ENCODE measurements at regions of chr17 and their contacts with region 1.

Region 1: DNA sequence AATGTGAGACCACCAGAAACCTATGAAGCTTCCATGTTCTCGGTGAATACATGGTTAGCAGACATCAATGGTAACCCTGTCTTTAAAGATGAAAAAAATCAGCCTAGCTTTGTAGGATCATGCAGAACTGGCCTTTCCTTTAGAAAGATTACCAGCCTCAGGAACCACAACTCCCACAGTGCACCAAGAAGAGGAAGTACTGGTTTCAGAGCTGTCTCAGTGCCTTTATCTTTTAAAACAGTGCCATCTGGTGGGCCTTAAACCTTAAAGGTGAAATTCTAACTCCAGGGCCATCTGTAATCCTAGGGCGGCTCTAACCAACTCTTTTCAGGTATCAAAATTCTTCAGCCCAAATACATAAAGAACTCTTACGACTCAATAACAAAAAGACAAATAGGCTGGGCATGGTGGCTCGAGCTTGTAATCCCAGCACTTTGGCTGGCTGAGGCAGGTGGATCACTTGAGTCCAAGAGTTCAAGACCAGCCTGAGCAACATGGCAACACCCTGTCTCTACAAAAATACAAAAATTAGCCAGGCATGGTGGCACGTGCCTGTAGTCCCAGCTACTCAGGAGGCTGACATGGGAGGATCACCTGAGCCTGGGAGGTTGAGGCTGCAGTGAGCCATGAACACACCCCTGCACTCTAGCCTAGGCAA is 5.4 kb downstream of the ATPAF2 start:
- DNase-seq: peak; percentile 86
- H3K4me3 Mint-ChIP-seq: no peak overlapping the region
- H3K27ac Mint-ChIP-seq: no peak overlapping the region
- H3K4me1 Mint-ChIP-seq: peaks cover 13% of the 10 kb centered on the region
- H3K27me3 Mint-ChIP-seq: no peaks in the 10 kb centered on the region
- CTCF ChIP-seq: peak; percentile 59

Region 2: DNA sequence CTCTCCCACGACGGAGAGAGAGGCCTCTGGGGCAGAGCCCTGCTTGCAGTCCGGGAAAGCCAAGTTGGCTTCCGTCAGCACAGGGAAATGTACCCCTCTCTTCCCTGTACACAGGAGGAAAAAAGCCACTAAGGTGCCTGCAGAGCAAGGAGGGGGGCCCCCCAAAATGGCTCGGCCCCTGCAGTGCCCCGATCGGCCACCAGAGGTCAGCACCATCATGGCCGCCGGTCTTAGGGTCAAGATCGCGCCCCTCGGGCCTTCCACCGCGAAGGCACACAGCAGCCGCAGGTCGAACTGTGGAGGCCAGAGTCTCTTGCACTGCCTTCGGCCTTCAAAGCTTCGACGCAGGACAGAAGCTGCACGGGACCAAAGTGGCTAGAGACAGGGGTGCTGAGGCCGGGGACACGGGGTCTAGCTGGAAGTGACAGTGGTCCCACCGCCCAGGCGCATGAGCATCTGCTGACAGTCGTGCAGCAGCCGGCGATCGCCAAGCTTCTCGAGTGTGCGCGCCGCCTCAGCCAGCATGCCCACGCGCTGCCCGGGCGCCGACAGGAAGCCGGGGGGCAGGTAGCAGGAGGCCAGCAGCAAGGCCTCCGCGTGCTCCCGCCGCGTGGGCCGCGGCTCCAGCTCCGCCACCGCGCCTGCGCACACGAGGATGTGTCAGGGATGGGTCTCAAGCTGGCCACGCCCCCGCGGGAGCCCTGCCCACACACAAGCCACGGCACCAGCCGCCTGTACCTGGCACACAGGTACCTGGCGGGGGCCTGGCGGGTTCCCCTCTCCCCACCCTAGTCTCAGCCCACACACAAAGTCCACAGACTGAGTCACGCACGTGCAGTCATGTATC is 221.1 kb before region 1 on chr17:
- CTCF ChIA-PET with region 1: interaction called, 4 read pairs
- POLR2A ChIA-PET with region 1: no interaction called
- intact Hi-C with region 1: loop called (anchors 1 kb)
- DNase-seq: peak; percentile 62
- H3K4me3 Mint-ChIP-seq: no peak overlapping the region
- H3K27ac Mint-ChIP-seq: no peak overlapping the region
- H3K4me1 Mint-ChIP-seq: peaks cover 5% of the 10 kb centered on the region
- H3K27me3 Mint-ChIP-seq: no peaks in the 10 kb centered on the region
- CTCF ChIP-seq: peak; percentile 98

Region 3: DNA sequence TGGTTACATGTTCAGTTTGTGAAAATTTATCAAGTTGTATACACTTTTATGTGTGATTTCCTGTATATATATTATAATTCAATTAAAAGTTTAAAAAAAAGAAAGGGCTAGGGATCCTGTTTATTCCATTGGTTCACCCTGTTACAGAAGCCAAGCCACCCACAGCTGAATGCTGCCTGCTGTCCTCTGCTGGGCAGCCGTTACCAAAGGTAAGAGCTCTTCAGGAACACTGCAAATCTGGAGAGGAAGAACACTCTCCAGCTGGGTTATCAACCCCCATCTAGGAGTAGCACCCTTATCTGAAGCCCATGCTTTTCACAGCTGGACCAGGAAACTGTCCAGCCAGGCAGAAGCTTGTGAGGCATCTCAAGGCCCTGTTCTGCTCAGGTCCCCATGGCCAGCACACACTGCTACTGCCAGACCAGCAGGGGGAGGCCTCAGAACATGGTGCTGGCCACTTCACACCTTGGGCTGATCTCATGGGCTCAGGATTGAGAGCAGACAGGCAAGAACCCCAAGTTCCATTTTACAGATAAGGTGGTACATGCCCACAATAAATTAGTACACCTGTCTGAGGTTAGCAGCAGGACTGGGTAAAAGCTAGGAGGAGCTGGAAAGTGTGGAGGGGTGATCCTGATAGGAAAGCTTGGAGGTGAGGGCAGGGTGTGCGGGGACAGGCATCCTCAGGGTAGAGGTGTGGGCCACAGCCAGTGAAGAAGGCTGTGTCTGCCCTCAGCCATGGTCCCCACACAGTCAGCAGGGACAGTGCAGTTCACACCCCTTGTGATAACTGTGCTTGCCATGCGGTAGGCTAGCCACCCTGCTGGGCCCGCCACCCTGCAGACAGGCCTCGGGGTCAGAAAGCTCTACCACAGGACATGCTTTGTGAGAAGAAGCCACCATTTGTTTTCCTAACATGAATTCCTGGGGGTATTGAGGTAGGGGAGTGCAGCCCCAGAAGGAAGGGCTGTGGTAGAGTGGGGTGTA is 142.5 kb before region 1 on chr17:
- CTCF ChIA-PET with region 1: interaction called, 36 read pairs
- POLR2A ChIA-PET with region 1: interaction called, 4 read pairs
- intact Hi-C with region 1: loop called (anchors 1 kb)
- DNase-seq: peak; percentile 71
- H3K4me3 Mint-ChIP-seq: no peak overlapping the region
- H3K27ac Mint-ChIP-seq: peak overlapping the region; percentile 21
- H3K4me1 Mint-ChIP-seq: no peaks in the 10 kb centered on the region
- H3K27me3 Mint-ChIP-seq: no peaks in the 10 kb centered on the region
- CTCF ChIP-seq: peak; percentile 77

Region 4: DNA sequence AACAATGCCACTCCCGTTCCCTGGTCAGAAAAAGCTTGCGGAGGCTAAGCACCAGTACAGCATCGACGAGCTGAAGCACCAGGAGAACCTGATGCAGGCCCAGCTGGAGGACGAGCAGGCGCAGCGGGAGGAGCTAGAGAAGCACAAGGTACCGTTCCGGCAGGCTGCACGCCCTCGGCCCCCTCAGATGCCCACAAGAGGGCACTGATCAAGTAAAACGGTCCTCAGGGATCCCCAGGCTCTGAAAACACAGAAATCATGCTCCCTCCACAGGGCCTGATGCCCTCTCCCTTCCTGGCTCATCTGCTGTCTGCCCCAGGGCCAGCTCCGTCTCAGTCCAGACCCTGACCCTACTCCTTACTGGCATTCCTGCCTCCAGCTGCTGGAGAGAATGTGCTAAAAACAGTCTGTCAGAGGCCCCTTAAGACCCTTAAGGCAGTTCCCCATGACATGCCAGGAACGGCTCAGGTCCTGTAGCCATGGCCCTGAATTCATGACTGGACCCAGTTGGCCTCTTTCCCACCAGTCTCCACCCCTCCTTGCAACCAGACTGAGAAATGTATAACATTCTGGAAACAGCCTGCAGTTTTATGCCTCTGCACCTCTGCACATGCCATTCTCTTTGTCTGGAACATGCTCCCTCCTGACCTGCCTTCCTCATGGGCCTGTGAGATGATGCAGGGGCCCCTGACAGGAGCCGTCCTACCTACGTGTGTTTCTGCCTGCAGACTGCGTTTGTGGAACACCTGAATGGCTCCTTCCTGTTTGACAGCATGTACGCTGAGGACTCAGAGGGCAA is 39.1 kb before region 1 on chr17:
- CTCF ChIA-PET with region 1: interaction called, 18 read pairs
- POLR2A ChIA-PET with region 1: no interaction called
- intact Hi-C with region 1: loop called (anchors 2 kb)
- DNase-seq: no peak
- H3K4me3 Mint-ChIP-seq: no peak overlapping the region
- H3K27ac Mint-ChIP-seq: no peak overlapping the region
- H3K4me1 Mint-ChIP-seq: peaks cover 24% of the 10 kb centered on the region
- H3K27me3 Mint-ChIP-seq: no peaks in the 10 kb centered on the region
- CTCF ChIP-seq: peak; percentile 3

Measured in MCF 10A (cell line).